PC-3 (cell line): ENCODE measurements at regions of chr20 and their contacts with region 1.

Region 1: GRCh38 chr20:7897781-7898364 is 42.4 kb downstream of the HAO1 start:
- DNase-seq: no peak
- ATAC-seq: no peak
- H3K4me3 ChIP-seq: no peak overlapping the region
- H3K27ac ChIP-seq: no peak overlapping the region
- H3K4me1 ChIP-seq: peaks cover 16% of the 10 kb centered on the region
- H3K27me3 ChIP-seq: no peaks in the 10 kb centered on the region
- CTCF ChIP-seq: no peak

Region 2: GRCh38 chr20:7399575-7399974 is 498.3 kb before region 1 on chr20:
- CTCF ChIA-PET with region 1: no interaction called
- POLR2A ChIA-PET with region 1: interaction called, 10 read pairs
- intact Hi-C with region 1: no loop called
- DNase-seq: peak; percentile 1
- ATAC-seq: no peak
- H3K4me3 ChIP-seq: no peak overlapping the region
- H3K27ac ChIP-seq: no peak overlapping the region
- H3K4me1 ChIP-seq: no peaks in the 10 kb centered on the region
- H3K27me3 ChIP-seq: no peaks in the 10 kb centered on the region
- CTCF ChIP-seq: no peak

Region 3: GRCh38 chr20:7926767-7927166 is 28.9 kb after region 1 on chr20:
- CTCF ChIA-PET with region 1: no interaction called
- POLR2A ChIA-PET with region 1: no interaction called
- intact Hi-C with region 1: no loop called
- DNase-seq: peak; percentile 67
- ATAC-seq: no peak; the same call in 1 of the 2 replicates
- H3K4me3 ChIP-seq: no peak overlapping the region
- H3K27ac ChIP-seq: peak overlapping the region; percentile 50
- H3K4me1 ChIP-seq: peaks cover 27% of the 10 kb centered on the region
- H3K27me3 ChIP-seq: no peaks in the 10 kb centered on the region
- CTCF ChIP-seq: peak; percentile 92